ENCODE measurements at regions of chr17 and their contacts with region 1.

Region 1: GRCh38 chr17:74203439-74204240 is at the start of gene RPL38:
- DNase-seq: peak; percentile 87
- ATAC-seq: peak; percentile 84
- H3K4me3 ChIP-seq: peak within 1 kb of the TSS; percentile 93 to 95
- H3K27ac ChIP-seq: peak within 1 kb of the TSS; percentile 93
- H3K4me1 ChIP-seq: peaks cover 31% of the 10 kb centered on the region
- H3K27me3 ChIP-seq: peaks cover 5% of the 10 kb centered on the region; the same call in 1 of the 2 replicates
- CTCF ChIP-seq: peak; percentile 96
- total RNA-seq, gene RPL38: 968 TPM

Region 2: DNA sequence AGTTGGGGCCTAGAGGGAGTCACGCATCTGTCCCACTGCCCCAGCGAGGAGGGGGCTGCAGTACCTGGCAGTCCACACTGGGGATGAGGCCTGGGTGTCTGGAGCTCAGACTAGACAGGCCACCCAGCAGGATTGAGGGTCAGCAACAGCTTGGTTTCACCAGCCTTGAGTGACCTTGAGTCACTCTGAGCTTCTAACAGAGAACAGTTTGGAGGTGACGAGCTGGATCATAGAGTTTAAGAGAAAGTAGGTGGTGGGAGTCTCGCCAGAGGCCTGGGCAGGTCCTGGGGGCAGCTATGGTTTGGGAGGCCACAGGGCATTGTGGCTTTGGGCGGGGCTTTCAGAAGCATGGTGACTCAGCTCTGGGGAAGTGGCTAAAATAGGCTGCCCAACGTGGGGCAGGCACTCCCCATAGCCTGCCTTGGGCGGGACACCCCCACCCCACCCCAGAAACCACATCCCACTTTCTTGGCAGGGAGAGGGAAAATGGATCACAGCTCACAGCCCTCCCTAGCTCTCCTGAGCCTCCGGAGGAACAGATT is 912.3 kb before region 1 on chr17:
- CTCF ChIA-PET with region 1: no interaction called
- POLR2A ChIA-PET with region 1: interaction called, 10 read pairs
- in situ Hi-C with region 1: no loop called
- intact Hi-C with region 1: no loop called
- DNase-seq: no peak
- ATAC-seq: peak; percentile 75
- H3K4me3 ChIP-seq: peak overlapping the region in 1 of 2 experiments; percentile 15; a peak in 1 of 4 replicates
- H3K27ac ChIP-seq: peak overlapping the region; percentile 93
- H3K4me1 ChIP-seq: peaks cover 80% of the 10 kb centered on the region
- H3K27me3 ChIP-seq: no peaks in the 10 kb centered on the region
- CTCF ChIP-seq: no peak

Region 3: GRCh38 chr17:73311781-73312641 is 891.6 kb before region 1 on chr17 and contains the start of gene CDC42EP4:
- CTCF ChIA-PET with region 1: interaction called, 12 read pairs
- POLR2A ChIA-PET with region 1: no interaction called
- in situ Hi-C with region 1: no loop called
- intact Hi-C with region 1: no loop called
- DNase-seq: no peak
- ATAC-seq: peak; percentile 92
- H3K4me3 ChIP-seq: peak within 1 kb of the TSS; percentile 90
- H3K27ac ChIP-seq: peak within 1 kb of the TSS; percentile 87
- H3K4me1 ChIP-seq: peaks cover 25% of the 10 kb centered on the region
- H3K27me3 ChIP-seq: no peaks in the 10 kb centered on the region
- CTCF ChIP-seq: no peak
- total RNA-seq, gene CDC42EP4: 65.9 TPM

Region 4: DNA sequence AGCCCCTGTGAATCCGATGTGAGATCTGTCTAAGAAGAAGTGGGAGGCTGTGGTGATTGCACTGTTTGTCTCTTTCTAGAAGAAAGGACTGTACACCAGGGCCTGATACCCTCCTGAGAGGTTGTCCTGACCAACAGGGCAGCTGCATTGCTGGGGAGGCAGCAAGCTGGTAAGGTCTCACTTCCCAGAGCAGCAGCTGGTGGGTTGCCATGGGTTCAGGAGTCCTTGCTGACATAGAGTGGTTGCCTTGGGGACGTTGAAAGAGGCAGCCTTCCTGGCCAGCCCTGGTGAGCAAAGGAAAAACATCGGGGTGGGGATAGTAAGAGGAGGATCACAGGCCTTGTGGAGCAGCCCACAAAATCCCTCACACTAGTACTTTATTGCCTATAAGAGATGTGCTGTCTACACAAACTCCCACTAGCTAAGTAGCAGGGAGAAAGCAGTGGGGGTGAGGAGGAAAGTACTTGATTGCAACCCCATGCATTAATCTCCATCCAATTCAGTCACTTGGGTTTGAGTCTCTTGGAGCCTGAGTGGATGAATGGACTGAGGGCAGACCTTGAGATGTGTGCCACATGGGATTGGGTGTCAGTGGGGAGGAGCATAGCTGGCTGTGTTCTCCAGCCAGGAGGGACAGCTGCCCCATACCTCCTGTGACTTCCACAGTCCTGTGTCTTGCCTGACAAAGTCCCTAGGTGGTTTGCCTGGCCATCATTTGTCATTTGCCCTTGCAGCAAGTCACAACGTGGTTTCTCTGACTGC is 144.0 kb before region 1 on chr17:
- CTCF ChIA-PET with region 1: interaction called, 8 read pairs
- POLR2A ChIA-PET with region 1: interaction called, 10 read pairs
- in situ Hi-C with region 1: no loop called
- intact Hi-C with region 1: no loop called
- DNase-seq: no peak
- ATAC-seq: no peak
- H3K4me3 ChIP-seq: no peak overlapping the region
- H3K27ac ChIP-seq: no peak overlapping the region
- H3K4me1 ChIP-seq: no peaks in the 10 kb centered on the region
- H3K27me3 ChIP-seq: peaks cover 44% of the 10 kb centered on the region
- CTCF ChIP-seq: no peak

Region 5: DNA sequence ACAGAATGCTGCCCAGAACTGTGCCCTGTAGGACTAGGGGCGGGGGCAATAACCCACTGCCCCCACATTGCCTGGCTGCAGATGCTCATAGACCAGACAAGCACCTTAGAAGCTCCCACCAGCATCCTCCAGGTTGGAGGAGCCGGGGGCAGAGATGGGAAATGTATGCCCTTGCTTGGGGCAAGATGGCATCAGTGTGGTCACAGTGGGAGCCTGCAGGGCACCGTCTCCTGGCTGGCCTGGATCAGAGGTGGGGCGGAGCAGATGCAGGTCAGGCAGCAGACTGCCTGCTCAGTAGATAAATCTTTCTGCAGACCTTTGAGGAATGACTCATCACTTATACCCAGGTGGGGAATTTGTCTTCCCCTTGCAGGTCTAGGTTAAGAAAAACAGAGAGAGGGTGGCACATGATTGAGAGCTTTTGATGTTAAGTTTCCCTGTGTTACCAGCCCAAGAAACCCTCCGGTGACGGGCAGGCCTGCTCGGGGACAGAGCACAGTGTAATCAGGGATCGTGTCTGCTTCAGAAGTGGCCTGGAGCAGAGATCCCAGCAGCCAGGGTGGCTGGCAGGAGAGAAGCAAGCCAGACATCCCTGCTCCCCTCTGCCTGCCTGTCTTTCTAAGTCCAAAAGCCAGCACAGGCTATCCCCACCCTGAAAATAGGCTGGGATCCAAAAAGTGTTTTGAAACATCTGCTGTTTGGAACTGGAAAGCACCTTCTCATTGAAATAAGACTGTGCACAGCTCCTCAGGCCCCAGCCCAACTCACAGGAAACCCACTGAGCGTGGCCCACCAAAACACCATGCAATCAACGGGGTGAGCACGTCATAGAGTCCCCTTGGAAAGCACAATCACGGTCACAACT is 50.8 kb before region 1 on chr17:
- CTCF ChIA-PET with region 1: no interaction called
- POLR2A ChIA-PET with region 1: no interaction called
- in situ Hi-C with region 1: no loop called
- intact Hi-C with region 1: no loop called
- DNase-seq: no peak
- ATAC-seq: no peak
- H3K4me3 ChIP-seq: no peak overlapping the region
- H3K27ac ChIP-seq: no peak overlapping the region
- H3K4me1 ChIP-seq: no peaks in the 10 kb centered on the region
- H3K27me3 ChIP-seq: no peaks in the 10 kb centered on the region; the same call in 1 of the 2 replicates
- CTCF ChIP-seq: no peak

Region 6: DNA sequence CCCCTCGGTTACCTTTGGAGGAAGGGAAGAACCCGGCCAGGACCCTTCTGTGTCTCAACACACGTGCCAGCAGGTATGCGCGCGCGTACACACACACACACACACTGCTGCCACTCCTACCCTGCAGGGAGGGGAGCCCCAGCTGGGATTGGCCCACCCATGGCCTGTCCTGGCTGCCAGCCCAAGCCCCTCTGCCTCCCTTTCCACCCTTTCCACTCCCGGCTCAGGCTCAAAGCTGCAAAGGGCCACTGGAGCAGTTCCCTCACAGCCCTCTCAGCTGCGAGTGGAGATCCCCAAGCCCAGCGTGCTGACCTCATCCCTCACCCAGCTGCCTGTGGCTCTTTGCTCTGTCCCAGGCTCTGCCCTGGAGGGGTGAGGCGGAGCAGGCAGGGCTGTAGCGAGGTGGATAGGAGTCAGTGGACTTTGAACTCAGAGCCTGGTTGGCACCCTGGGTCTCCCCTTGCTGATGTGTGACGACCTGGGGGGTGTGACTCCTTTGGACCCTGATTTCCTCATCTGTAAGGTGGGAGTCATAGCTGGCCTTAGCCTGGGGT is 136.9 kb after region 1 on chr17:
- CTCF ChIA-PET with region 1: interaction called, 10 read pairs
- POLR2A ChIA-PET with region 1: no interaction called
- in situ Hi-C with region 1: no loop called
- intact Hi-C with region 1: no loop called
- DNase-seq: no peak
- ATAC-seq: peak; percentile 54; the same call in 1 of the 2 replicates
- H3K4me3 ChIP-seq: no peak overlapping the region
- H3K27ac ChIP-seq: no peak overlapping the region
- H3K4me1 ChIP-seq: no peaks in the 10 kb centered on the region
- H3K27me3 ChIP-seq: no peaks in the 10 kb centered on the region; the same call in 1 of the 2 replicates
- CTCF ChIP-seq: no peak